Activated B cell treated with CpG ODN at 0.5 μM for 24 hours (primary cell): ENCODE measurements at regions of chrX and their contacts with region 1.

Region 1: DNA sequence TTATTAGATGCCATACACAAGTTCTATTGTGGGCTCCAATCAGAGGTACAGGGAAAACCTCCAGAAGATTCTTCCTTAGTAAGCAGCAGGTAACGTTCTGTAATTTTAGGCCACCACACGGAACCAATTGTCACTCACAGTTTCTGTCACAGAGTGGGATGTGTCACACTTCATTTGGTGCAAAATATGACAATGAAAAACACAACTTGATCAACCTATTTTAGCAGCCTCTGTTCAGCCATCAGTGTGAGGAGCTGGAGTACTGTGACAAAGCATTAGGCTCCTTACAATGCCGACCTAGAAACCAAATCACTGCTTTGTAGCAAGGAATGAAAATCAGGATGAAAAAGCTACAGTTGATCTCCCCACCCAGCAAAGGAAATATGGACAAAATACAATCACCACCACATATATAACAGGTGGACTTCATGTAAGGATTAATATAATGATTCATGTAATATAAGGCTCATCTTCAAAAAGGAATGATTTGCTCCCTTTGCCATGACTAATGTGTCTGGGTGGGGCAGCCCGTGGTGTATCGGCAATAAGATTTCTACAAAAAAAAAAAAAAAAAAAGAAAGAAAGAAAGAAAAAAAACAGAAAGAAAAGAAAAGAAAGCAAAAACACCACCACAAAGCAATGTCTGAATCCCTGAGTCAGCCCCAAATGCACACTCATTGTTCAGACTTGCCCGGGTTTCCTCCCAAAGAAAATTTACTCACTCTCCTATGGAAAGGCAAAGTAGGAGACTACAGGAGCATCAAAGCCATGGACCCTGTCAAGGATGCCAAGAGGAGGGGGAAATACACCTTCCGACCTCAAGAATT is 36.0 kb downstream of the SLC9A7 start:
- DNase-seq: no peak
- ATAC-seq: no peak
- H3K4me3 Mint-ChIP-seq: no peak overlapping the region
- H3K27ac Mint-ChIP-seq: peak overlapping the region; percentile 56
- H3K4me1 Mint-ChIP-seq: peaks cover 68% of the 10 kb centered on the region
- H3K27me3 Mint-ChIP-seq: no peaks in the 10 kb centered on the region
- CTCF ChIP-seq: no peak

Region 2: GRCh38 chrX:46750889-46751288 is 27.9 kb after region 1 on chrX:
- CTCF ChIA-PET with region 1: no interaction called
- POLR2A ChIA-PET with region 1: interaction called, 13 read pairs
- intact Hi-C with region 1: no loop called
- DNase-seq: no peak
- ATAC-seq: no peak
- H3K4me3 Mint-ChIP-seq: no peak overlapping the region
- H3K27ac Mint-ChIP-seq: no peak overlapping the region
- H3K4me1 Mint-ChIP-seq: peaks cover 76% of the 10 kb centered on the region
- H3K27me3 Mint-ChIP-seq: no peaks in the 10 kb centered on the region
- CTCF ChIP-seq: no peak

Region 3: DNA sequence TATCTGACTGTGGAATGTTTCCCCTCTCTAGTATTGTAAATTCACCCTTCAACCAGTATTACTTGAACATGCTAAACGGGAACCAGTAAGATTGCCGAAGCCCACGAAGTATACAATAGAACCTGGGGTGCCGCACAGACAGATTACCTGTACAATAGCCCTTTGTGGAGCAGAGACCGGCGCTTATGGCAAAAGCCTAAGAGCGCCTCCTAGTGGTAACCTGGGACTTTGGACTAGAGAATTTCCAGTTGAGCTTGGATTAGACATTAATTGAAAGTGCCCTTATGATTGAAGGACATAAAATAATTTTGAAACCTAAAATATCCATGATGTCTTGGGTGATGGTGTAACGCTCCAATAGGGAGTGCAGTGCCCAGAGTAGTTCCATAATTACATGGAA is 661.5 kb after region 1 on chrX:
- CTCF ChIA-PET with region 1: no interaction called
- POLR2A ChIA-PET with region 1: no interaction called
- intact Hi-C with region 1: no loop called
- DNase-seq: no peak
- ATAC-seq: peak; percentile 72
- H3K4me3 Mint-ChIP-seq: no peak overlapping the region
- H3K27ac Mint-ChIP-seq: no peak overlapping the region
- H3K4me1 Mint-ChIP-seq: peaks cover 7% of the 10 kb centered on the region
- H3K27me3 Mint-ChIP-seq: no peaks in the 10 kb centered on the region
- CTCF ChIP-seq: peak; percentile 33